ENCODE measurements at regions of chr12 and their contacts with region 1.

Region 1: DNA sequence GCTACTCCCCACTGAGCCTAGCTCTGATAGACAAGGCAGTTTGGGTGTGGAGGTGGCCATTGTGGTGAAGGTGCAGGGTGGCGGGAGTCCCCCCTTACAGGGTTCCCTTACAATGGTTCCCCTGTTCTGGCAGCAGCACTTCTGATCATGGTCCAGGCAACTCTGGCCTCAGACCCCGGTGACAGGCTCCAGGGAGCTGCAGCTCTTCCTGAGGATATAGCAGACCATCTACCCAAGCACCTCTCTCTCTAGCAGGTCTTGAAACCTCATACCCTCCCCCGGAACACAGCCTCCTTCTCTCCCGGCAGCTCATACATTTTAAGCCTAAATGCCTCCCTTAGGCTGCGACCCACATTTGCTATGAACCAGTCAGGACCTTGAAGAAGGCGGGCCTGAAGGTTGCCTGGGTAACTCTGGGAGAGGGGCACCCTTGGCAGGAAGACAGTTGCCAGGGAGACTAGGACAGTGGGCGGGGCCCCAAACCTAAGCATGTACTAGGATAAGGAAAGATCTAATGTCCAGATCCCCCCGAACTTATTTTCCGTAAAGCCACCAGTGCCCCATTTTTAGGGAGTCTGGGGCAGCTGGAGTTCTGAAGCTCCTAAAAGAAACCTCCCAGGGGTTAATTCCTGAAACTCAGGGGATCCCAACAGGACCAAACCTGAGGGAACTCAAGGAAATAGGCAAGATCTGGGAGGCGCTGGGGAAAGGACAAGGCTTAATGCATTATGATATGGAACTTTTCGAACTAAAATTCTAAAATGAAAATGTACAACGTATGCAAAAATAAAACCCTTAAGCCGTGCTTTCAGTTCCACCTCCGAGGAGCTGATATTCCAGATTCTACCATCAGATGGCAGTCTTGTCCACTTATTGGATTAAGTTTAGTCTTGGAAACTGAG is 4.5 kb upstream of the GDF11 start:
- DNase-seq: peak; percentile 68 to 71
- H3K4me3 ChIP-seq: peak overlapping the region; percentile 74
- H3K27ac ChIP-seq: no peak overlapping the region
- H3K4me1 ChIP-seq: peaks cover 12% of the 10 kb centered on the region
- H3K27me3 ChIP-seq: no peaks in the 10 kb centered on the region
- CTCF ChIP-seq: peak; percentile 90

Region 2: DNA sequence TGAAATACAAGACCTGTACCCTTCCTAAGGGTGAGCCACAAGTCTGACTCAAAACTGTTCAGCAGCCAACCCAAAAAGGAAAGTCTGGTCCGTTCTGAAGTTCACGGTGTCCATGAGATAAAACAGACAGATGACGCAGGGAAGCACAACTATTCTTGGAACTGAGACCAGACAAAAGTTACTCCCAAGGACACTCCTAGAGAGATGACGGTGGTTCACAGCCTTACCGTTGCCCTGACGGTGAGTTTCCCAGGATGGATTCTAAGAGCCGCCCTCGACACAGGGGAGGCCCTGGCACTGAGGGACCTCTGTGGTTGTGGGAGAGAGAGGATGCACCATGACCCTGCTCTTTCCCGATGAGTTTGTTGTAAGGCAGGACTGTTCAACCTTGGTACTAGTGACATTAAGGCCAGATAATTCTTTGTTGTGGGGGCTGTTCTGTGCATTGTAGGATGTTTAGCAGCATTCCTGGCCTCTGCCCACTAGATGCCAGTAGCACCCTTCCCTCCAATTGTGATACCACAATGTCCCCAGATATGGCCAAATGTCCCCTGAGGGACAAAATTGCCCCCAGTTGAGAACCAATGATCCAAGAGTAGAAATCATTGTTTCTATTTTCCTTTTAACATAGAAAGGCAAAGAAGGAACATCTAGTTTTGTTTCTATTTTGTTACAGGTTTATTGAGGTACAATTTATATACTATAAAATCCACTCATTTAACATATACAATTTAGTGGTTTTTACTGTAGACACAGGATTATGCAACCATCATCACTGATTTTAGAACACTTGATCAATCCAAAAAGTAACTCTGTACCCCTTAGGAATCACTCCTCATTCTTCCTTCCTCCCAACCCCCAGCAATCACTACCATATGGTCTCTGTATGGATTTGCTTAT is 78.6 kb before region 1 on chr12:
- CTCF ChIA-PET with region 1: interaction called, 3 read pairs
- POLR2A ChIA-PET with region 1: no interaction called
- intact Hi-C with region 1: loop called (anchors 1 kb)
- DNase-seq: peak in 1 of 2 experiments; percentile 14
- H3K4me3 ChIP-seq: no peak overlapping the region
- H3K27ac ChIP-seq: no peak overlapping the region
- H3K4me1 ChIP-seq: no peaks in the 10 kb centered on the region
- H3K27me3 ChIP-seq: peaks cover 5% of the 10 kb centered on the region; the same call in 1 of the 2 replicates
- CTCF ChIP-seq: peak; percentile 58

Region 3: GRCh38 chr12:55681142-55682077 is 57.0 kb before region 1 on chr12:
- CTCF ChIA-PET with region 1: no interaction called
- POLR2A ChIA-PET with region 1: no interaction called
- intact Hi-C with region 1: loop called (anchors 1 kb)
- DNase-seq: peak; percentile 37 to 47
- H3K4me3 ChIP-seq: peak overlapping the region; percentile 21; the same call in 1 of the 2 replicates
- H3K27ac ChIP-seq: no peak overlapping the region
- H3K4me1 ChIP-seq: no peaks in the 10 kb centered on the region
- H3K27me3 ChIP-seq: peaks cover 49% of the 10 kb centered on the region
- CTCF ChIP-seq: no peak; the same call in 1 of the 2 replicates

Region 4: GRCh38 chr12:55715833-55716581 is 22.4 kb before region 1 on chr12 and contains the start of gene BLOC1S1:
- CTCF ChIA-PET with region 1: interaction called, 13 read pairs
- POLR2A ChIA-PET with region 1: no interaction called
- intact Hi-C with region 1: no loop called
- DNase-seq: peak; percentile 75 to 92
- H3K4me3 ChIP-seq: peak within 1 kb of the TSS; percentile 100
- H3K27ac ChIP-seq: peak within 1 kb of the TSS; percentile 87
- H3K4me1 ChIP-seq: peaks cover 36% of the 10 kb centered on the region
- H3K27me3 ChIP-seq: peaks cover 12% of the 10 kb centered on the region; the same call in 1 of the 2 replicates
- CTCF ChIP-seq: no peak
- total RNA-seq, gene BLOC1S1: 81.1 and 101 TPM in 2 replicates

Region 5: GRCh38 chr12:55771736-55772135 is 33.4 kb after region 1 on chr12:
- CTCF ChIA-PET with region 1: no interaction called
- POLR2A ChIA-PET with region 1: no interaction called
- intact Hi-C with region 1: no loop called
- DNase-seq: no peak
- H3K4me3 ChIP-seq: no peak overlapping the region
- H3K27ac ChIP-seq: no peak overlapping the region
- H3K4me1 ChIP-seq: no peaks in the 10 kb centered on the region
- H3K27me3 ChIP-seq: no peaks in the 10 kb centered on the region
- CTCF ChIP-seq: no peak

Region 6: GRCh38 chr12:55817346-55818139 is 79.2 kb after region 1 on chr12 and contains the starts of genes ORMDL2 and SARNP:
- CTCF ChIA-PET with region 1: interaction called, 4 read pairs
- POLR2A ChIA-PET with region 1: no interaction called
- intact Hi-C with region 1: loop called (anchors 5 kb)
- DNase-seq: peak; percentile 96 to 99
- H3K4me3 ChIP-seq: peak within 1 kb of the TSS; percentile 72
- H3K27ac ChIP-seq: peak within 1 kb of the TSS; percentile 51
- H3K4me1 ChIP-seq: peaks cover 18% of the 10 kb centered on the region
- H3K27me3 ChIP-seq: no peaks in the 10 kb centered on the region
- CTCF ChIP-seq: no peak
- total RNA-seq, gene ORMDL2: 22.5 and 22.9 TPM in 2 replicates
- total RNA-seq, gene SARNP: 65.6 and 74.8 TPM in 2 replicates

Region 7: DNA sequence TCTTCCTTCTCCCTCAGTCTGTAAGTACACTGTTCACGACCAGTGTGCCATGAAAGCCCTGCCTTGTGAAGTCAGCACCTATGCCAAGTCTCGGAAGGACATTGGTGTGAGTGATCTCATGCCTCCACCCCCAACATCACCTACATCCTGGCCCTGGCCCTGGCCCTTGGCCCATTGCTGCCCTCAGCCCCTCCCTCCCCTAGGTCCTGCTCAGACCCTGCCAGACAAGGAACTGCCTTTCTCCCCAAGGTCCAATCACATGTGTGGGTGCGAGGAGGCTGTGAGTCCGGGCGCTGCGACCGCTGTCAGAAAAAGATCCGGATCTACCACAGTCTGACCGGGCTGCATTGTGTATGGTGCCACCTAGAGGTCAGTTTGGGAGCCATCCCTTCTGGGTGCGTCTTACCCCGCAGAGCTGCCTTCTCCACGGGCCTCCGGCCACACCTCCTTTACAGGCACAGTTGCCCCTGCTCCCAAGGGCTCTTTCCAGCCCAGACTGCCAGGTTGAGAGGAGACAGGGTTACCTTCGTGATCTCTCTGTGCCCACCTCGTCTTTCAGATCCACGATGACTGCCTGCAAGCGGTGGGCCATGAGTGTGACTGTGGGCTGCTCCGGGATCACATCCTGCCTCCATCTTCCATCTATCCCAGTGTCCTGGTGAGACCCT is 201.8 kb after region 1 on chr12:
- CTCF ChIA-PET with region 1: interaction called, 3 read pairs
- POLR2A ChIA-PET with region 1: no interaction called
- intact Hi-C with region 1: loop called (anchors 1 kb)
- DNase-seq: peak; percentile 62 to 87
- H3K4me3 ChIP-seq: no peak overlapping the region
- H3K27ac ChIP-seq: 0 out of 2 replicates have a peak overlapping the region, but pooled peaks have one; percentile 16
- H3K4me1 ChIP-seq: peaks cover 27% of the 10 kb centered on the region
- H3K27me3 ChIP-seq: no peaks in the 10 kb centered on the region
- CTCF ChIP-seq: peak; percentile 86

Region 8: DNA sequence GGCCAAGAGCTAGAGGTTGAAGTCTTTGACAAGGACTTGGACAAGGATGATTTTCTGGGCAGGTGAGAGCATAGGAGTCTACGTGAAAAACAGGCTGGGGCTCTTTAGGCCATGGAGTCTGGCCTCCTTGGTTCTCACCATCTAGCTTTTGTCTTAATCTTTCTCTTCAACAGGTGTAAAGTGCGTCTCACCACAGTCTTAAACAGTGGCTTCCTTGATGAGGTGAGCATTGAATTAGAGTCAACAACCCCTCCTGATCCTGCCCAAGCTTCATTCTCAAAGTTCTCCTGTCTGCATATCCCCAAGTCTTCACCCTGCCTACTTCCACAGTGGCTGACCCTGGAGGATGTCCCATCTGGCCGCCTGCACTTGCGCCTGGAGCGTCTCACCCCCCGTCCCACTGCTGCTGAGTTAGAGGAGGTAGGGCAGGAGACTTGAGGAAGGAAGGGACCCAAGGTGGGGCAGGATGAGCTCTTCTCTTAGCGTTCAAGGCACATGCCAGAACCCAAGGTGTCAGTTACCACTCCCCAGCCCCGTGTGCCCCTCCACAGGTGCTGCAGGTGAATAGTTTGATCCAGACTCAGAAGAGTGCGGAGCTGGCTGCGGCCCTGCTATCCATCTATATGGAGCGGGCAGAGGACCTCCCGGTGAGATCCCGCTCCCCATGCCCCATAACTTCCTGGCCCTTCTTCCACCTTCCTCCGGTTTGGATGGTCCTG is 399.6 kb after region 1 on chr12:
- CTCF ChIA-PET with region 1: no interaction called
- POLR2A ChIA-PET with region 1: no interaction called
- intact Hi-C with region 1: no loop called
- DNase-seq: no peak
- H3K4me3 ChIP-seq: no peak overlapping the region
- H3K27ac ChIP-seq: no peak overlapping the region
- H3K4me1 ChIP-seq: no peaks in the 10 kb centered on the region
- H3K27me3 ChIP-seq: no peaks in the 10 kb centered on the region
- CTCF ChIP-seq: no peak